K562 (cell line): ENCODE measurements at regions of chr1 and their contacts with region 1.

Region 1: GRCh38 chr1:231603598-231604275 is 22.9 kb upstream of the DISC1 start:
- DNase-seq: peak; percentile 47 to 80 (median 58)
- ATAC-seq: peak; percentile 90
- H3K4me3 ChIP-seq: peak overlapping the region; percentile 37
- H3K27ac ChIP-seq: 0 out of 3 replicates have a peak overlapping the region, but pooled peaks have one; percentile 22
- H3K4me1 ChIP-seq: peaks cover 0 to 5% of the 10 kb centered on the region in 2 experiments; a peak in 2 of 5 replicates
- H3K27me3 ChIP-seq: peaks cover 3 to 10% of the 10 kb centered on the region in 2 experiments; a peak in 3 of 5 replicates
- CTCF ChIP-seq: peak; percentile 72 to 94 (median 81)
- EP300 ChIP-seq: no peak
- POLR2A ChIP-seq: no peak
- RAD21 ChIP-seq: peak; percentile 89 to 91

Region 2: DNA sequence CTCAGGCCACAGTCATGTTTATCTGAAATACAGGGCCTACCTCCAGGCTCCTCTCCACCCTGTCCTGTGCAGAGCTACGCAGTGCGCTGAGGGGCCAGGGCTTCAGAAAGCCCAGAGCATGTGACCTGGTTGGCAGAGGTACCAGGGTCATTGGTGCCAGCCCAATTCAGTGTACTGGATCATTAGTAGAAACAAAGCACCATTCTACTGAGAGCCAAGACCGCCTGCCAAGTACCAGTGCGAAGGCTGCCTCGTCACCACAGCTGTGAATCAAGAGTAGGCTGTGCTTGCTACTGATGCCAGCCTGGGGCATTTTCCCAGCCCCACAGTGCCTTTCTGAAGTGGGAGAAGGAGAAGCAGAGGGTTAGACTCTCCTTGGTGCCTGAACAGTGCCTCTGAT is 796.7 kb before region 1 on chr1:
- CTCF ChIA-PET with region 1: no interaction called
- POLR2A ChIA-PET with region 1: no interaction called
- in situ Hi-C with region 1: loop called (anchors 10 kb)
- intact Hi-C with region 1: no loop called
- DNase-seq: no peak
- ATAC-seq: no peak
- H3K4me3 ChIP-seq: no peak overlapping the region
- H3K27ac ChIP-seq: no peak overlapping the region
- H3K4me1 ChIP-seq: no peaks in the 10 kb centered on the region
- H3K27me3 ChIP-seq: peaks cover 0 to 22% of the 10 kb centered on the region in 2 experiments; a peak in 2 of 5 replicates
- CTCF ChIP-seq: no peak
- EP300 ChIP-seq: no peak
- POLR2A ChIP-seq: no peak
- RAD21 ChIP-seq: no peak

Region 3: GRCh38 chr1:231211005-231211857 is 392.5 kb before region 1 on chr1:
- CTCF ChIA-PET with region 1: no interaction called
- POLR2A ChIA-PET with region 1: no interaction called
- in situ Hi-C with region 1: no loop called
- intact Hi-C with region 1: loop called (anchors 5 kb)
- DNase-seq: peak; percentile 86 to 92 (median 90)
- ATAC-seq: peak; percentile 93
- H3K4me3 ChIP-seq: peak overlapping the region; percentile 32
- H3K27ac ChIP-seq: no peak overlapping the region
- H3K4me1 ChIP-seq: peaks cover 0 to 17% of the 10 kb centered on the region in 2 experiments; a peak in 3 of 5 replicates
- H3K27me3 ChIP-seq: peaks cover 10 to 18% of the 10 kb centered on the region in 2 experiments; a peak in 3 of 5 replicates
- CTCF ChIP-seq: peak; percentile 94 to 98 (median 98)
- EP300 ChIP-seq: no peak
- POLR2A ChIP-seq: no peak
- RAD21 ChIP-seq: peak; percentile 99

Region 4: DNA sequence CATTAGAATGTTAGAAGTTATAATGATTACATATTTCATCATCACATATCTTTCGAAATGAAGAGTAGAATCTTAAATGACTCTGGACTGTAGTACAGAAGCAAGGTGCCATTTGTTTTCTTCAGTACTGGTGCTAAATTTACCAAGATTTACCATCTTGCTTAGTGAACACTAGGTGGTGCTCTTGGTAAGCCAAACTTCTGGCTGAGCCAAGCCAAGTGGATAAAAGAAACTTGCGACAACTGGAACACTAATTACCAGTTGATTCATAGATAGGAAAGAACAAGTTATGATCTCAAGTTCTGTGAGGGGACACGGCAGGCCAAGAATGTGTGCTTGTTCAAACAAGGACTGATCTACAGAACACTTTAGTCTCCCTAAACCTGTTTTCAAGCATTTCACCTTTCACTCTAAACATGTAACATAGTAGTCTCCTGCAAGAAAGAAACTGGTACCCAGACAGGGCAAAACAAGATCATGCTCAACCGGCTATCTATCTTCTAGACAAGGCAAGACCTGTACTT is 245.8 kb before region 1 on chr1:
- CTCF ChIA-PET with region 1: interaction called, 34 read pairs
- POLR2A ChIA-PET with region 1: interaction called, 4 read pairs
- in situ Hi-C with region 1: loop called (anchors 5 kb)
- intact Hi-C with region 1: loop called (anchors 1 kb)
- DNase-seq: peak; percentile 51 to 70 (median 56)
- ATAC-seq: peak; percentile 87
- H3K4me3 ChIP-seq: no peak overlapping the region
- H3K27ac ChIP-seq: no peak overlapping the region
- H3K4me1 ChIP-seq: peaks cover 0 to 21% of the 10 kb centered on the region in 2 experiments; a peak in 3 of 5 replicates
- H3K27me3 ChIP-seq: no peaks in the 10 kb centered on the region
- CTCF ChIP-seq: peak; percentile 78 to 95 (median 82)
- EP300 ChIP-seq: no peak
- POLR2A ChIP-seq: no peak
- RAD21 ChIP-seq: peak; percentile 97 to 98

Region 5: GRCh38 chr1:231421993-231422764 is 181.6 kb before region 1 on chr1 and contains the start of gene EGLN1:
- CTCF ChIA-PET with region 1: interaction called, 3 read pairs
- POLR2A ChIA-PET with region 1: no interaction called
- in situ Hi-C with region 1: no loop called
- intact Hi-C with region 1: loop called (anchors 5 kb)
- DNase-seq: peak; percentile 88 to 96 (median 94)
- ATAC-seq: peak; percentile 82
- H3K4me3 ChIP-seq: peak within 1 kb of the TSS; percentile 62
- H3K27ac ChIP-seq: peak within 1 kb of the TSS; percentile 75
- H3K4me1 ChIP-seq: peaks cover 19 to 22% of the 10 kb centered on the region in 2 experiments
- H3K27me3 ChIP-seq: no peaks in the 10 kb centered on the region
- CTCF ChIP-seq: peak; percentile 61 to 81 (median 74)
- EP300 ChIP-seq: no peak
- POLR2A ChIP-seq: peak; percentile 88
- RAD21 ChIP-seq: peak; percentile 79
- polyA plus RNA-seq, gene EGLN1: 5.2 to 5.6 TPM